ENCODE measurements at regions of chr7 and their contacts with region 1.

Region 1: GRCh38 chr7:2393706-2394105 is 9.7 kb upstream of the CHST12 start:
- DNase-seq: no peak
- H3K4me3 ChIP-seq: no peak overlapping the region
- H3K27ac ChIP-seq: no peak overlapping the region
- H3K4me1 ChIP-seq: no peaks in the 10 kb centered on the region
- H3K27me3 ChIP-seq: no peaks in the 10 kb centered on the region
- CTCF ChIP-seq: no peak

Region 2: DNA sequence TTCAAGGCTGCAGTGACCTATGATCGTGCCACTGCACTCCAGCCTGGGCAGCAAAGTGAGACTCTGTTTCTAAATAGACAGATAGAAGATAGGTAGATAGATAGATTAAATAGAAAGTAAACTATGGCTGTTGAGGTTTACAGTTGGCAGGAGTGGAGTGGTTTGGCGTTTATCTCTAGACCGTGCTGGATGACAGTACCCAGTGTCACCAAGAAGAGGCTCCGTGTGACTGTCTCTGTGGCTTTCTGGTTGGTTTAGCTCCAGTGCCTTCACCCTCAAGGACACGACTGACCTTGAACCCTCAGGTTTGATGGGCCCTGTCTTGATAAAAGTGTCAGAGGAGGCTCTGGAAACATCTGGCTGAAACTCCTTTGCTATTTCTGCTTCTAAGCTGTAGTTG is 41.4 kb after region 1 on chr7:
- intact Hi-C with region 1: loop called (anchors 1 kb)
- DNase-seq: no peak
- H3K4me3 ChIP-seq: no peak overlapping the region
- H3K27ac ChIP-seq: no peak overlapping the region
- H3K4me1 ChIP-seq: peaks cover 0 to 3% (median 0%) of the 10 kb centered on the region in 4 donors
- H3K27me3 ChIP-seq: no peaks in the 10 kb centered on the region
- CTCF ChIP-seq: no peak

Region 3: DNA sequence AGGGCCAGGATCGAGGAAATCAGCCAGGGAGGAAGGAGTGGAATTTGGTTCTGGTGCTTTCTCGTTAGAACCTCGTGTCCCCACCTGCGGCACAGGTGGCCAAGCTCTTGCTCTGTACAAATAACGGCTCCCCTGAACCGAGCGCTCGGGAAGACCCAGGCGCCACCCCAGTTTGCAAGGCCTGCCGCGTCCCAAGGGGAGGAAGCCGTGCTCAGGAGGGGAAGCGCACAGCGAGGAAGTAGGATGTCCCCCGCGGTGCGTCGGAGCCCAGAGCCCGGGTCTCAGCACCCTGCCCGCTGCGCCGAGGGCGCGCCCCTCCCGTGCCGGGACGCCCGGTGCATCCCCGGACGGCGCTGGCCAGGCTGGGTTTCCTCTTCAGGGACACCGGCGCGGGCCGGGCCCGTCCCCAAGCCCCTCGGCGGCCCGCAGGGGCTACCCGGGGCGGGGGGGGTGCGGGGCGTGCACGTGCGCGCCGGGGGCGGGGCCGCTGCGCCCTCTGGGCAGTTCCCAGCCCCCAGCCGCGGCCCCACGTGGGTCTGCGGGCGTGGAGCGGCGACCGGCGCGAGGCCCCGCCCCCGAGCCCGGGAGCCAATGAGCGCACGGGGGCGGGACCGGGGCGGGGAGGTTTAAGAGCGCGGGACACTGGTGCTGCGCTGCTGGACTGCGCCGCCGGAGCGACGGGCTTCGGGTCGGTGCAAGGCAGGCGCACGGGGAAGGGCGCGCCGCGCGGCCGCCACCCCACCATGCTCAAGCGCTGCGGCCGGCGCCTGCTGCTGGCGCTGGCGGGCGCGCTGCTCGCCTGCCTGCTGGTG is 125.6 kb after region 1 on chr7 and contains the start of gene LFNG:
- intact Hi-C with region 1: no loop called
- DNase-seq: peak; percentile 84 to 90
- H3K4me3 ChIP-seq: peak within 1 kb of the TSS; percentile 50 to 63
- H3K27ac ChIP-seq: no peak within 1 kb of the TSS
- H3K4me1 ChIP-seq: peaks cover 0 to 57% (median 34%) of the 10 kb centered on the region in 4 donors
- H3K27me3 ChIP-seq: peaks cover 0 to 45% of the 10 kb centered on the region in 2 donors
- CTCF ChIP-seq: no peak

Measured in tibial artery (tissue), 4 donors.